Mammary epithelial cell (primary cell): ENCODE measurements at regions of chr9 and their contacts with region 1.

Region 1: DNA sequence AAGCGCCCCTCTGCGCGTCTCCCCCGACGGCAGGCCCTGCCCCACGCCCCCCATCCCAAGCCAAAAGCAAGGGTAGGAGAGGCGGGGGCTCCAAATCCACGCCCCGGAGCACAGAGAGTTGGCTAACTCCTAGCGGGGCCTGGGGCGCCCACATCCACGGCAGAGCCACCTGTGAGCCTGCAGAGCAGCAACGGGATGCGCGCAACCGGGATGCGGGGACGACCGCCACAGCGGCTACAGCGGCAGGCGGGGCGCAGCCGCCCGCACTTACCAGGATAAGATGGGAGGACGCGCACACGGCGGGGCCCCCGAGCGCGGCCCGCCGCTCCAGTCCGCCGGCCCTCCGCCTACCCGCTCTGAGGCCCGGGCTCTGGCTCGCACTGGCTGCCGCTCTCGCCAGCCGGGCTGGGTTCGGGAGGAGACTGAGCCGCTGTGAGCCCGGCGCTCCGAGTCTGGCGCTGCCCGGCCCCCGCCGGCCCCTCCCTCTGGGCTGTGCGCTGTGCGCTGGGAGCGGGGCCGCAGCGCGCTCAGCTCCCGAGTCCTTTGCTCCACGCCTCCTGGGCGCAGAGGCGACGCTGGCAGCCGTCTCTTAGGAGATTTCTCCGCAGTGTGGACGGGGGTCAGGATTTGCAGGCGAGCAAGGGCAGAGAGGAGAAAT is at the start of gene SLC24A2:
- DNase-seq: peak; percentile 27
- H3K4me3 ChIP-seq: no peak within 1 kb of the TSS
- H3K27ac ChIP-seq: no peak within 1 kb of the TSS
- H3K4me1 ChIP-seq: peaks cover 19% of the 10 kb centered on the region
- H3K27me3 ChIP-seq: peaks cover 16% of the 10 kb centered on the region
- CTCF ChIP-seq: no peak
- total RNA-seq, gene SLC24A2: under 0.01 TPM in 1 of 2 donors, not detected in the other

Region 2: GRCh38 chr9:19456996-19457692 is 331.6 kb before region 1 on chr9:
- CTCF ChIA-PET with region 1: no interaction called
- dilution Hi-C with region 1: no loop called
- in situ Hi-C with region 1: no loop called
- intact Hi-C with region 1: no loop called
- DNase-seq: peak; percentile 65
- H3K4me3 ChIP-seq: no peak overlapping the region
- H3K27ac ChIP-seq: no peak overlapping the region
- H3K4me1 ChIP-seq: no peaks in the 10 kb centered on the region
- H3K27me3 ChIP-seq: no peaks in the 10 kb centered on the region
- CTCF ChIP-seq: peak; percentile 94 to 95

Region 3: GRCh38 chr9:19754921-19755320 is 33.8 kb before region 1 on chr9:
- CTCF ChIA-PET with region 1: interaction called, 24 read pairs
- dilution Hi-C with region 1: no loop called
- in situ Hi-C with region 1: no loop called
- intact Hi-C with region 1: no loop called
- DNase-seq: no peak
- H3K4me3 ChIP-seq: no peak overlapping the region
- H3K27ac ChIP-seq: no peak overlapping the region
- H3K4me1 ChIP-seq: no peaks in the 10 kb centered on the region
- H3K27me3 ChIP-seq: no peaks in the 10 kb centered on the region
- CTCF ChIP-seq: no peak

Region 4: DNA sequence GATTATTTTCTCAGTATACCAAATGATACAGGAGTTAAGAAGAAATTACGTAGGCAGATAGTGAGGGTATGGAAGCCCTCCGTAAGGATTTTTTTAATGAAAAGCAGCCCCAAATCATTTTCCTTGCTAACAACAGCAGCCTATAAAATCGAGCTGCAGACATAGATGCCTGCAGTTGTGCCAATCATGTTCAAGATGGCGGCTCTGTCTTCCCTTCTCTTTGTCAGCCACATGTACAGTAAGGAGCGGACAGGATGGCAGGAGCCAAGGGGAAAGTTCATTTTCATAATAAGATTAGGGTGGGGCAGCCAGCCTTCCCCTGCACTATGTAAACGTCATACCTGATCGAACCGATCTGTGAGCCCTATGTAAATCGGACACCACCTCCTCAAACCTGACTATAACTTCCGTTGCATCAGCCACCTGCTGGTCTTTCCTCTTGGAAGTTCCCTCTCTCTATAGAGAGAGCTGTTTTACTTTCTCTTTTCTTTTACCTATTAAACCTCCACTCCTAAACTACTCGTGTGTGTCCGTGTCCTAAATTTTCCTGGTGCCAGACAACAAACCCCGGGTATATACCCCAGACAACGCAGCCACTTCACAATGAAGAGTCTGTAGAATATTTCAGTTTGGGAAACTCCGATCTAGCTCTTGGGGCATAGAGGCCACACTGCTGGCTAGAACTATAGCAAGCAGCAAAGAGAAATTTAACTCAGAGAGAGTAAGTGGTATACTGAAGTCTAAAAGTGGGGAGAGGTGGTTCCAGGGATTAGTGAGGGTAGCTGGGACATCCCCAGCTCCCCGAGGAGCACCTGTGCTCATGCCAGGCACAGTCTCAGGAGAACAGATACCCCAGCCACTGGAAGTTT is 20.9 kb after region 1 on chr9:
- CTCF ChIA-PET with region 1: no interaction called
- dilution Hi-C with region 1: no loop called
- in situ Hi-C with region 1: no loop called
- intact Hi-C with region 1: loop called (anchors 1 kb)
- DNase-seq: no peak
- H3K4me3 ChIP-seq: no peak overlapping the region
- H3K27ac ChIP-seq: no peak overlapping the region
- H3K4me1 ChIP-seq: no peaks in the 10 kb centered on the region
- H3K27me3 ChIP-seq: no peaks in the 10 kb centered on the region
- CTCF ChIP-seq: no peak

Region 5: GRCh38 chr9:19940811-19941535 is 152.2 kb after region 1 on chr9:
- CTCF ChIA-PET with region 1: no interaction called
- dilution Hi-C with region 1: no loop called
- in situ Hi-C with region 1: no loop called
- intact Hi-C with region 1: no loop called
- DNase-seq: no peak
- H3K4me3 ChIP-seq: no peak overlapping the region
- H3K27ac ChIP-seq: no peak overlapping the region
- H3K4me1 ChIP-seq: no peaks in the 10 kb centered on the region
- H3K27me3 ChIP-seq: no peaks in the 10 kb centered on the region
- CTCF ChIP-seq: no peak